ENCODE measurements at regions of chr10 and their contacts with region 1.

Region 1: DNA sequence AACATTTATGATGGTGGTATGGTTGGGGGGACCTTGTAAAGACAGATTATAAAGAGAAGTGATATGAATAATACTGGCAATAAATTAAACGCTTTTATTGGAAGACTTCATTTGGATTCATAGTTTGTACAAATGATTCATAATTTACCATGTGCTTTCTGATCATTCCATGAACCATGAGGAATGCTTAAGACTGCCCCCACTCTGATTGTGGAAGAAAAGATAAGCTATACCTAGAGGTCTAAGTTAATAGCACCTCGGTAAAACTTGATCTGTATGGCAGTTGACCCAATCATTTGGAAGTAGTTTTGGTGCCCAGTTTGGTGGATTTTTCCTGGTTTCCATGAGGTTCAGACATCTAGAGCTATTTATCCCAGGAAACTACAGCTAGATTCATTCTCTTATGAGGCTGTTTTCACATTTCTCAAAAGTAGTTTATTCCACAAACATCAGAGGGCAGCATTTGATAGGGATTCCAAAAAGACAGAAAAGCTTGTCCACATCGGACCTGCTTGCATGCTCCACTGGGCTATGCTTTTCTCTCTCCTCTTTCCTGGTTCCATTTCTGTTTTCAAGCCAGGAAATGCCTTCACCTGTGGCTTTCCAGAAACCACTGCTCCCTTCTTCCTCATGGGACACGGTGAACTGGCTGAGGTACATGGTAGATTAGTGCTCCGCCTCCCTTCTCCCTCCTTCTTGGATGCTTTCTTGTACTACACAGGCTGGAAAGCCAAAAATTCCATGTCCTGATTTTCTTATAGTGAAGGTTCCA is 29.2 kb downstream of the TFAM start:
- DNase-seq: peak; percentile 59 to 85
- H3K4me3 ChIP-seq: no peak overlapping the region
- H3K4me3 Mint-ChIP-seq: no peak overlapping the region
- H3K27ac Mint-ChIP-seq: peak overlapping the region; percentile 38
- H3K4me1 ChIP-seq: peaks cover 35% of the 10 kb centered on the region
- H3K4me1 Mint-ChIP-seq: peaks cover 37% of the 10 kb centered on the region
- H3K27me3 ChIP-seq: no peaks in the 10 kb centered on the region
- H3K27me3 Mint-ChIP-seq: no peaks in the 10 kb centered on the region
- CTCF ChIP-seq: peak; percentile 57 to 84

Region 2: DNA sequence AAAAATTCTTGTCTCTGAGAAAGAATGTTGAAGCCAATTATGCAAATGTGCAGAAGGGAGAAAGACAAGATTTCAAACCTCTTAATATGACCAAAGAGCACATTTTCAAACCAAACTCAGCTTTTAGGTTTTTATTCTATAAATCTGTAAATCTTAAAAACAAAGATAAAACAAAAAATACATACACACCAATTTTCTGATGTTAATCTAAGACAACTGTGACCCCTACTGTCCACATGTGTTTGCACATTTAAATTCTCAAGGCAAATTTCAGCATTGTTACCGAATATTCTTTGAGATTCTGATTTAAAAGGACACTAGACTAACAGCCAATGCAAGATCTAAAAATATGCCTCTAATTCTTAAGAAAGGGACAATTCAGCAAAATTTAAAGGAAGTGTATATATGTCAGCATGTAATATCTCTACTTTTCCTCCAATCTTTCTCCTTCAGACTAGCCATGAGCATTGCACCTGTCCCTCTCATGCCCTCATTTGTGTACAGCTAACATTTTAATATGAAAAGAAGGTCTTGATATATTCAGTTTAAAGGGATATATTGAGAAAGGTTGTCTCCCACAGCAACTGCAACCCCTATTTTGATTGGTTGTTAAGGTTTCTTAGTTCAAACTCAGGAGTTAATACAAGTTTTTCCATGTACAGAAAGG is 564.6 kb before region 1 on chr10:
- CTCF ChIA-PET with region 1: no interaction called
- POLR2A ChIA-PET with region 1: no interaction called
- intact Hi-C with region 1: no loop called
- DNase-seq: no peak
- H3K4me3 ChIP-seq: no peak overlapping the region
- H3K4me3 Mint-ChIP-seq: no peak overlapping the region
- H3K27ac Mint-ChIP-seq: no peak overlapping the region
- H3K4me1 ChIP-seq: no peaks in the 10 kb centered on the region
- H3K4me1 Mint-ChIP-seq: no peaks in the 10 kb centered on the region
- H3K27me3 ChIP-seq: no peaks in the 10 kb centered on the region
- H3K27me3 Mint-ChIP-seq: no peaks in the 10 kb centered on the region
- CTCF ChIP-seq: peak; percentile 54 to 62

Region 3: DNA sequence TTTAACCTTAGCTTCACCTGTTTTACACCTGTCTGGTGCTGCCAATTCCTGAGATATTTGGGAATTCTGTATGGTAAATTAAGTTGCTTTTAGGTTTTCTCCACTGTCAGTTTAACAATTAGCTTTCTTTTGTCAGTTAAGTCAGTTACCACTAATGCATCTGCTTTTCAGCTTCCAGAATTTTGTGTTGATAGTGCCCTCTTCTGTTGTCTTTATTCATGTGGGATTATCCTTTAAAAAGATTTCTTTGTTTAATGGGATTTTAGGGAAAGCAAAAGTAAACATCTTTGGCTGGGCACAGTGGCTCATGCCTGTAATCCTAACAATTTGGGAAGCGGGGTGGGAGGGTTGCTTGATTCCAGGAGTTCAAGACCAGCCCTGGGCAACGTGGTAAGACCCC is 21.1 kb before region 1 on chr10:
- CTCF ChIA-PET with region 1: no interaction called
- POLR2A ChIA-PET with region 1: no interaction called
- intact Hi-C with region 1: no loop called
- DNase-seq: no peak
- H3K4me3 ChIP-seq: no peak overlapping the region
- H3K4me3 Mint-ChIP-seq: no peak overlapping the region
- H3K27ac Mint-ChIP-seq: no peak overlapping the region
- H3K4me1 ChIP-seq: no peaks in the 10 kb centered on the region
- H3K4me1 Mint-ChIP-seq: peaks cover 9% of the 10 kb centered on the region
- H3K27me3 ChIP-seq: no peaks in the 10 kb centered on the region
- H3K27me3 Mint-ChIP-seq: no peaks in the 10 kb centered on the region
- CTCF ChIP-seq: no peak

Region 4: DNA sequence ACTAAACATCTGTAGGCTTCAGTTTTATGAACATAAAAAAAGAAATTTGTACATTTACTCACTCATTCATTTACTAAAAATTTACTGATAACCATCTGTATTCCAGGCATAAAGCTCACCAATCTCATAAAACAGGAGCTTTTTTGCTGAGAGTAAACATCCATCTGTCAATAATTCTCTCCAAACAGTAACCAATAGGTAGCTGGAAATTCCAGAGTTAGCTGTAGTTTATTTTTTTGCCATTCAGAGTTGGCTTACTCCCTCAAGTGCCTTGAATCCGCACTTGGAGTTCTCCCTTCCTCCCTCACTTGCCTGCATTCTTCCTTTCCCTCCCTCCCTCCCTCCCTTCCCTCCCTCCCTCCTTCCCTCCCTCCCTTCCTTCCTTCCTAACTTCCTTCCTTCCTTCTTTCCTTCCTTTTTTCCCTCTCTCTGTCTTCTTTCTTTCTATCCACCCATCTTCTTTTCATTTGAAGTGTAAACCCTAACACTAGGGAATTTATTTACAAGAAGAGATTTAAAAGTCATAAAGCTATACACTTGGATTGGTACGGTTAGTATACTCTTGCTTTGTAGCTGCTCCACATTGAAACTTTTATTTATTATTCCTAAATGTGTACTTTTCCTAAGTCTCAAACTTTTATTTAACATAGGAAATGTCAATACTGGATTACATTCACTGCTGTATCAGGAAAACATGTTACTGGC is 53.6 kb after region 1 on chr10:
- CTCF ChIA-PET with region 1: interaction called, 8 read pairs
- POLR2A ChIA-PET with region 1: no interaction called
- intact Hi-C with region 1: loop called (anchors 1 kb)
- DNase-seq: peak; percentile 50 to 64
- H3K4me3 ChIP-seq: no peak overlapping the region
- H3K4me3 Mint-ChIP-seq: peak overlapping the region; percentile 39
- H3K27ac Mint-ChIP-seq: peak overlapping the region; percentile 69
- H3K4me1 ChIP-seq: peaks cover 45% of the 10 kb centered on the region
- H3K4me1 Mint-ChIP-seq: peaks cover 30% of the 10 kb centered on the region
- H3K27me3 ChIP-seq: no peaks in the 10 kb centered on the region
- H3K27me3 Mint-ChIP-seq: no peaks in the 10 kb centered on the region
- CTCF ChIP-seq: no peak

Region 5: GRCh38 chr10:58513188-58514110 is 99.0 kb after region 1 on chr10:
- CTCF ChIA-PET with region 1: interaction called, 19 read pairs
- POLR2A ChIA-PET with region 1: interaction called, 3 read pairs
- intact Hi-C with region 1: loop called (anchors 1 kb)
- DNase-seq: peak; percentile 89 to 91
- H3K4me3 ChIP-seq: peak overlapping the region; percentile 98
- H3K4me3 Mint-ChIP-seq: peak overlapping the region; percentile 94
- H3K27ac Mint-ChIP-seq: peak overlapping the region; percentile 78
- H3K4me1 ChIP-seq: peaks cover 33% of the 10 kb centered on the region
- H3K4me1 Mint-ChIP-seq: peaks cover 19% of the 10 kb centered on the region
- H3K27me3 ChIP-seq: no peaks in the 10 kb centered on the region
- H3K27me3 Mint-ChIP-seq: no peaks in the 10 kb centered on the region
- CTCF ChIP-seq: no peak

Region 6: DNA sequence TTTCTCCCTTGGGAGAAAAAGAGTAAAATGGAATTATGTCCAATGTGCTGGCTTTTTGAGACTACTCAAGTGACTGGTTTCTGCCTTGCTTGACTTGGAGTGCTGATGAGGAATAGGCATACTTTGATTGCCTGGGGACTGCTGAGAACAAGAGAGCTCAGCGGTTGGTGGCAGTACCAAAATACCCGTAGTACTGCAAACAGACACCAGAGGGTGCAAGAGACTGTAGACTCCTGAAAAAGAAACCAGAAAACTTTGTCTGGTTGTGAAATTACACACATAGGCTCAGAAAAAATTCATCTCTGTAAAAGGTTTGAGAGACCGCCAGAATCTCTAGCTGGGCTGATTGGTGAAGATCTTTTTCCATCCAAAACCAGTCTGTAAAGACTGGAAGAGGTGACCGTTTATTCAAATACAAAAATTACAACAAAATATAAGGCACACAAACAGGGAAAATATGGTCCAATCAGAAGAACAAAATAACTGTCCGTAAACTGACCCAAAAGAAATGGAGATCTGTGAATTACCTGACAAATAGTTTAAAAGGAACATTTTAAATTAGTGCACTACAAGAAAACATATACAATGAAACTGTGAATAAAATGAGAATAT is 116.7 kb after region 1 on chr10:
- CTCF ChIA-PET with region 1: interaction called, 34 read pairs
- POLR2A ChIA-PET with region 1: interaction called, 3 read pairs
- intact Hi-C with region 1: loop called (anchors 1 kb)
- DNase-seq: peak; percentile 82 to 93
- H3K4me3 ChIP-seq: no peak overlapping the region
- H3K4me3 Mint-ChIP-seq: no peak overlapping the region
- H3K27ac Mint-ChIP-seq: peak overlapping the region; percentile 15
- H3K4me1 ChIP-seq: peaks cover 8% of the 10 kb centered on the region; the same call in 1 of the 2 replicates
- H3K4me1 Mint-ChIP-seq: peaks cover 28% of the 10 kb centered on the region
- H3K27me3 ChIP-seq: no peaks in the 10 kb centered on the region
- H3K27me3 Mint-ChIP-seq: no peaks in the 10 kb centered on the region
- CTCF ChIP-seq: peak; percentile 92 to 97

Region 7: GRCh38 chr10:58641095-58641531 is 226.7 kb after region 1 on chr10:
- CTCF ChIA-PET with region 1: interaction called, 19 read pairs
- POLR2A ChIA-PET with region 1: no interaction called
- intact Hi-C with region 1: loop called (anchors 1 kb)
- DNase-seq: peak; percentile 70 to 77
- H3K4me3 ChIP-seq: no peak overlapping the region
- H3K4me3 Mint-ChIP-seq: peak overlapping the region; percentile 44
- H3K27ac Mint-ChIP-seq: peak overlapping the region; percentile 60
- H3K4me1 ChIP-seq: peaks cover 42% of the 10 kb centered on the region
- H3K4me1 Mint-ChIP-seq: peaks cover 55% of the 10 kb centered on the region
- H3K27me3 ChIP-seq: no peaks in the 10 kb centered on the region
- H3K27me3 Mint-ChIP-seq: no peaks in the 10 kb centered on the region
- CTCF ChIP-seq: peak; percentile 60 to 73

Region 8: DNA sequence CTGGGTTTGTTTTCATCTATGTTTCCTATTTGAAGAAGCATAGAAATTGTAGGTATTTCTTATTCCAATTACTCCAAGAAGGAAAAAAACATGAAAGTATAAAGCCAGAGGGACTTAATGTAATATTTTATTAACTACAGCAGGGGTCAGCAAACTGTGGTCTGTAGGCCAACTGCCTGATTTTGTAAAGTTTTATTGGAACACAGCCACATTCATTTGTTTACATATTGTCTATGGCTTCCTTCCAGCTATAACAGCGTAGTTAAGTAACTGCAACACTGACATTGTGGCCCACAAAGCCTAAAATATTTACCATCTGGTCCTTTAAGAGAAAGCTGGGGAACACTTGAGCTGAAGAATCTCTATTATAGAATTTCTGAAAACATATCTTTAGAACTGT is 404.4 kb after region 1 on chr10:
- CTCF ChIA-PET with region 1: interaction called, 3 read pairs
- POLR2A ChIA-PET with region 1: no interaction called
- intact Hi-C with region 1: loop called (anchors 10 kb)
- DNase-seq: no peak
- H3K4me3 ChIP-seq: no peak overlapping the region
- H3K4me3 Mint-ChIP-seq: no peak overlapping the region
- H3K27ac Mint-ChIP-seq: no peak overlapping the region
- H3K4me1 ChIP-seq: peaks cover 36% of the 10 kb centered on the region
- H3K4me1 Mint-ChIP-seq: peaks cover 64% of the 10 kb centered on the region
- H3K27me3 ChIP-seq: no peaks in the 10 kb centered on the region
- H3K27me3 Mint-ChIP-seq: no peaks in the 10 kb centered on the region
- CTCF ChIP-seq: peak in 1 of 2 experiments; percentile 14

Measured in Caco-2 (cell line).